Colonic mucosa (tissue), 4 donors: ENCODE measurements at regions of chr2 and their contacts with region 1.

Region 1: DNA sequence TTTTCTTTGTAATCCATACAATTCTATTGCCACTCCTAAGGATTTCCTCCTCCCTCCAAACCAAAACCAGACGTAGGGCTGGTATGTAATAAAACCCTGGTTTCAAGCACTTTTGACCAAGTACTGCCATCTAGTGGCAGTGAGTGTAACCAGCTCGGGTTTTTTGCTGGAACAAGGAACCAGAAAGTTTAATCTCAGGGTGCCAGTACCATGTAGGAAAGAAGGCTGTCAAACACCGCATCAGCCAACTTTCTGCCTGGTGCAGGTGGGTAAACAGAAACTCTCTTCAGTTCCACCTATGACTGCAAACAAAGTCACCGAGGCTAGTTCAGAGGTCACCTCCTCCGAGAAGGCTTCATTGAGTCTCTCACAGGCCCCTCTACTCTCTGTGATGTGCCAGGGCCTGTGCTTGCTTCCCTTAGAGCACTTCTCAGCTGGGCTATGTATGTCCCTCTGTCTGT is 10.2 kb upstream of the THNSL2 start:
- DNase-seq: peak; percentile 82
- H3K4me3 ChIP-seq: no peak overlapping the region
- H3K27ac ChIP-seq: no peak overlapping the region
- H3K4me1 ChIP-seq: no peaks in the 10 kb centered on the region
- H3K27me3 ChIP-seq: no peaks in the 10 kb centered on the region
- CTCF ChIP-seq: peak; percentile 70

Region 2: GRCh38 chr2:88003074-88003755 is 156.8 kb before region 1 on chr2:
- intact Hi-C with region 1: loop called (anchors 10 kb)
- DNase-seq: no peak
- H3K4me3 ChIP-seq: no peak overlapping the region
- H3K27ac ChIP-seq: no peak overlapping the region
- H3K4me1 ChIP-seq: no peaks in the 10 kb centered on the region
- H3K27me3 ChIP-seq: no peaks in the 10 kb centered on the region
- CTCF ChIP-seq: no peak

Region 3: DNA sequence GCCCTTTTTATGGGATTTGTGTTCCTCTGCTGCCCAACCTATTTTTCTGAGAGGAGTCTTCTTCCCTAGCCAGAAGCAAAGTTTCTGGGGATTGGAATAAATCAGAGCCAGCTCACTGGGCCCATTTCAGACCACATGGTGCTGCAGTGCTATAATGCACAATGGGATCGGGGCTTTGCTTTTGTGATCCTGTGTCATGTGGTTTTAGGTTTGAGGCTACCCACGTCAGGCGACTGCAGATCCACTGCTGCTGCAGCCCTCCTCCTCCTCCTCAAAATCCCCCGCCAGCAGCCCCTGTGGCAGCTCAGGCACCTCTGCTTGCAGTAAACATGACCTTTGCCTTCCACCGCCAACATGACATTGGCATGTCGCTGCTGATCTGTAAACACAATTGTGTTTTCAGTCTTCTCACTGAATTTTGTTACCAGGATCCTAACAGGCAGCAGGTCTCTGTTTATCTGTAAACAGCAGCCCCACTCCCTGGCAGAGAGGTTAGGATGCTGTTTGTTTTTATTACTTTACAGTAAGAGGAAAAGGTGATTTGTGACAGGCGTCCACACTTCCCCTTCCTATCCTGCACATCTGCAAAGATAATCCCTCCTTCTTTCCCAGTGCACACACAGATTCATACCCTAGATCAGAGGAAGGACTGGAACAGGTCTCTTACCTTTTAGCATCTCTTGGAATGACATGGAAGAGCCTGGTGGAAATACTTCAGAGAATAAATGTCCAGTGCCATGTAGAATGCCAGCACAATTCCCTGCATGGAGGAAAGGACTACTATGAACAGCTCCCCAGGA is 161.7 kb after region 1 on chr2:
- intact Hi-C with region 1: no loop called
- DNase-seq: no peak
- H3K4me3 ChIP-seq: no peak overlapping the region
- H3K27ac ChIP-seq: no peak overlapping the region
- H3K4me1 ChIP-seq: no peaks in the 10 kb centered on the region
- H3K27me3 ChIP-seq: no peaks in the 10 kb centered on the region
- CTCF ChIP-seq: no peak